AG04450 (cell line): ENCODE measurements at regions of chr4 and their contacts with region 1.

Region 1: DNA sequence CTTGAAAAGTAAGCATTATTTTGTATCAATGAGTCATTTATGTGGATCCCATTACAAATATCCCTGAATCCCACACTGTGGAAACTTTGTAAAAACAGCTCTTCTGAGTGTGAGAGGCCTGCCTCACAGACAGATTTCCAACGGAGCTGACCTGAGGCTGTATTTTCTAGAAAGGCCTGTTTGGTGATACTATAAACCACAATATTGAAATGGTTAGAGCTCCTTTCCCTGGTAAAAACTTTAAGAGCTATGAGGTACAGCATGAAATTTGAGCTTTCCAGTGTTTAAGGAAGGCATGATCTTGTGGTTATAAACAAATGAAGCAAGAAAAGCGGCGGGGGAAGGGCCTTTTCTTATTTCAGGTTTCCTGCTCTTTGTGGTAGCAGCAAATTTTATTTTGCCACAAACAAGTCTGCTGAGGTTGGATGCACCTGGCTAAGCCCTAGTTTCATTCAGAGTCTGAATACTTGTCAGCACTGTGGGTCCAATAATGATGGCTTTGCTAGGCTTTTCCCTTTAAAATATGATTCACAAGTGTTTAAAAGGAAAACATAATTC is 86.8 kb upstream of the ETNPPL start:
- DNase-seq: peak; percentile 53
- H3K4me3 ChIP-seq: no peak overlapping the region
- H3K27ac ChIP-seq: peak overlapping the region; percentile 39
- H3K27me3 ChIP-seq: no peaks in the 10 kb centered on the region
- CTCF ChIP-seq: no peak

Region 2: DNA sequence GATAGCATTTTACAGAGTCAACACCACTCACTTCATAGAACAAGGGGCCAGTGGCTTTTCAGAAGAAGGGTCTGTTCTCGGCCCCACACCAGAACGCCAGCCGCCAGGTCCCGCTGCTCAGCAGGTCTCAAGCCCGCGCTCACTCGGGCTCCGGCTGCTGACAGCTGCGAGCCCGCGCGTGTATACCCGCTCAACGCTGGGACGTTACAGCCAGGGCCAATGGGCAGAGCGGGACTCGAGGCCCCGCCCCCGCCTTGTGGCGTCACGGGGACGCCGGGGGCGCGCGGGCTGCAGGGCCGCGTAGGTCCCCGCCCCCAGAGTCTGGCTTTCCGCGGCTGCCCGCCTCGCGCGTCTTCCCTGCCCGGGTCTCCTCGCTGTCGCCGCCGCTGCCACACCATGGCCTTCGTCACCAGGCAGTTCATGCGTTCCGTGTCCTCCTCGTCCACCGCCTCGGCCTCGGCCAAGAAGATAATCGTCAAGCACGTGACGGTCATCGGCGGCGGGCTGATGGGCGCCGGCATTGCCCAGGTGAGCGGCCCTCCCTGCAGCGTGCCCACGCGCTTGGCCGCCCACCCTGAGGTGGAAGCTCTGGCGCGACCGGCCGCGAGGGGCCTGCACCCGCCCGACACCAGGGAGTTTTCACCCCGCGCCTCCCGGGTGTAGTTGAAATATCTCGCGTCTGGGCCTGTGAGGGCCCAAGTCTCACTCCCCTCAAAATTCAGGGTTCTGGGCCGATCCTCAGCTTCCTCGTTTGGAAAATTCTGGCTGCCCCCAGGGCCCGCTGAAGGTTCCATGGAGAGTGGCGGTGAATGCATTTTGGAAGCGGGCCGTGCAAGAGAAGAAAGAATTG is 859.9 kb before region 1 on chr4 and contains the start of gene HADH:
- CTCF ChIA-PET with region 1: interaction called, 11 read pairs
- POLR2A ChIA-PET with region 1: no interaction called
- DNase-seq: peak; percentile 68
- H3K4me3 ChIP-seq: peak within 1 kb of the TSS; percentile 94
- H3K27ac ChIP-seq: peak within 1 kb of the TSS; percentile 11
- H3K27me3 ChIP-seq: no peaks in the 10 kb centered on the region
- CTCF ChIP-seq: no peak
- polyA plus RNA-seq, gene HADH: 20.5 and 23.0 TPM in 2 replicates